Heart left ventricle (tissue), 16 donors: ENCODE measurements at regions of chr1 and their contacts with region 1.

Region 1: DNA sequence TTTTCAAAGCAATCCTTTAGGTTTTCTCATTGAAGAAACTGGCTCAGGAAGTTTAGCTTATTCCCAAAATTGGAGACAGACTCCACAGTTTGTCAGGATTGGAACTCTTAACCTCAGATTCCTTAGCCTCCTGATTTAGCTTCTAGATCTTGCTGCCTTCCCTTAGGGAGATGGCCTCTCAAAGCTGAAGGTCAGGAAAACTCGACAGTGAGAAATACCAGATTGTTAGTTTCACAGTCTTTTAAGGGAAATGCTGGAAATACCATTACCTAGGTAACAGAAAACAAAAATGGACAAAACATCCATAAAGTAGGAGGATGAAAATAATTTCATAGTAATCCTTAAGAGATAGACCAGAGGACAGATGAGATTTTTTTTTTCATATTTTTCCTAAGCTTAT is 7.8 kb downstream of the RASAL2 start:
- DNase-seq: peak in 1 of 5 donors; percentile 30
- ATAC-seq: peak in 3 of 4 donors; percentile 33 to 48 (median 42)
- H3K4me3 ChIP-seq: no peak overlapping the region
- H3K27ac ChIP-seq: peak overlapping the region in 8 of 12 donors; percentile 30 to 95 (median 58)
- H3K4me1 ChIP-seq: peaks cover 5 to 92% (median 56%) of the 10 kb centered on the region in 12 donors
- H3K27me3 ChIP-seq: no peaks in the 10 kb centered on the region
- CTCF ChIP-seq: no peak
- POLR2A ChIP-seq: no peak

Region 2: DNA sequence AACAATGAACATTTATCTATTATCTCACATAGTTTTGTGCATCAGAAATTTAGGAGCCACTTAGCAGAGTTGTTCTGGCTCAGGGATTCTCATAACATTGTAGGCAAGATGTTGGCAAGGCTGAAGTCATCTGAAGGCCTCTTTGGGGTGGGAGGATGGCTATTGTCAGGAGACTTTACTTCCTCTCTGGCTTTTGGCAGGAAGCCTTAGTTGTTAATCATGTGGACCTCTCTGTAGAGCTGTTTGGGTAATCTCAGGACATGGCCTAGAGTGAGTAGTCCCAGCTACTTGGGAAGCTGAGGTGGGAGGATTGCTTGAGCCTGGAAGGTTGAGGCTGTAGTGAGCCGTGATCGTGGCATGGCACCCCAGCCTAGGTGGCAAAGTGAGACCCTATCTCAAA is 32.4 kb after region 1 on chr1:
- intact Hi-C with region 1: loop called in 4 of 10 experiments (anchors 5 kb)
- DNase-seq: peak in 3 of 5 donors; percentile 36 to 64 (median 56)
- ATAC-seq: peak; percentile 50 to 97 (median 94)
- H3K4me3 ChIP-seq: no peak overlapping the region
- H3K27ac ChIP-seq: peak overlapping the region in 8 of 12 donors; percentile 9 to 80 (median 45)
- H3K4me1 ChIP-seq: peaks cover 3 to 50% (median 31%) of the 10 kb centered on the region in 12 donors
- H3K27me3 ChIP-seq: no peaks in the 10 kb centered on the region
- CTCF ChIP-seq: no peak
- POLR2A ChIP-seq: no peak

Region 3: GRCh38 chr1:178151831-178152230 is 50.2 kb after region 1 on chr1:
- intact Hi-C with region 1: loop called in 1 of 10 experiments (anchors 10 kb)
- DNase-seq: no peak
- ATAC-seq: peak; percentile 25 to 72 (median 50)
- H3K4me3 ChIP-seq: no peak overlapping the region
- H3K27ac ChIP-seq: peak overlapping the region in 1 of 12 donors; percentile 17
- H3K4me1 ChIP-seq: peaks cover 0 to 47% (median 14%) of the 10 kb centered on the region in 12 donors
- H3K27me3 ChIP-seq: no peaks in the 10 kb centered on the region
- CTCF ChIP-seq: no peak
- POLR2A ChIP-seq: no peak

Region 4: DNA sequence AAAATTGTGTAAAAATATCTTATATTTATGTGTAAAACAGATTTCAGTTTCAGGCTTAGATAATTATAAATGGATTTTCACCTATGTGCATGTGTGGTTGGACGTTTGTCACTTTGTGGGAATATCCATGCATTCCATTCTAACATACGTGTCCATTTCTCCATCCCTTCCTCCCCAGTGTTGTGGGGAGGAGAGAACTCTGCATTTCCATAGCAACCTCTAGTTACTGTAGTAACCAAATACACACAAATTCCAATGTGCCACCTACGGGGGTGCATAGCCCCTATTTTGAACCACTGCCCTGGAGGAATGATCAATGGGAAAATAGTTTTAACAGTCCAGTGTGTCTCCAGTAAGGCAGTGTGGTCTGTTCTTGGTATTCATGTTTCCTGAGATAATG is 71.3 kb after region 1 on chr1:
- intact Hi-C with region 1: loop called in 3 of 10 experiments (anchors 10 kb)
- DNase-seq: no peak
- ATAC-seq: no peak
- H3K4me3 ChIP-seq: no peak overlapping the region
- H3K27ac ChIP-seq: no peak overlapping the region
- H3K4me1 ChIP-seq: peaks cover 0 to 58% (median 26%) of the 10 kb centered on the region in 12 donors
- H3K27me3 ChIP-seq: no peaks in the 10 kb centered on the region
- CTCF ChIP-seq: no peak
- POLR2A ChIP-seq: no peak

Region 5: GRCh38 chr1:178243119-178243518 is 141.5 kb after region 1 on chr1:
- intact Hi-C with region 1: no loop called
- DNase-seq: no peak
- ATAC-seq: no peak
- H3K4me3 ChIP-seq: no peak overlapping the region
- H3K27ac ChIP-seq: no peak overlapping the region
- H3K4me1 ChIP-seq: peaks cover 0 to 20% (median 6%) of the 10 kb centered on the region in 12 donors
- H3K27me3 ChIP-seq: no peaks in the 10 kb centered on the region
- CTCF ChIP-seq: no peak
- POLR2A ChIP-seq: no peak

Region 6: GRCh38 chr1:178262120-178262500 is 160.5 kb after region 1 on chr1:
- intact Hi-C with region 1: loop called in 1 of 10 experiments (anchors 10 kb)
- DNase-seq: no peak
- ATAC-seq: peak in 1 of 4 donors; percentile 28
- H3K4me3 ChIP-seq: no peak overlapping the region
- H3K27ac ChIP-seq: no peak overlapping the region
- H3K4me1 ChIP-seq: peaks cover 0 to 34% (median 15%) of the 10 kb centered on the region in 12 donors
- H3K27me3 ChIP-seq: no peaks in the 10 kb centered on the region
- CTCF ChIP-seq: no peak
- POLR2A ChIP-seq: no peak

Region 7: GRCh38 chr1:178275553-178275952 is 173.9 kb after region 1 on chr1:
- intact Hi-C with region 1: loop called in 1 of 10 experiments (anchors 5 kb)
- DNase-seq: no peak
- ATAC-seq: no peak
- H3K4me3 ChIP-seq: no peak overlapping the region
- H3K27ac ChIP-seq: peak overlapping the region in 1 of 12 donors; percentile 1
- H3K4me1 ChIP-seq: peaks cover 0 to 47% (median 20%) of the 10 kb centered on the region in 12 donors
- H3K27me3 ChIP-seq: no peaks in the 10 kb centered on the region
- CTCF ChIP-seq: no peak
- POLR2A ChIP-seq: no peak